Pancreas (tissue), 10 donors: ENCODE measurements at regions of chr6 and their contacts with region 1.

Region 1: GRCh38 chr6:32825966-32826365 is 9.2 kb upstream of the HLA-DOB start:
- DNase-seq: no peak
- ATAC-seq: peak; percentile 56 to 87 (median 86)
- H3K4me3 ChIP-seq: no peak overlapping the region
- H3K27ac ChIP-seq: peak overlapping the region in 2 of 4 donors; percentile 4 to 33
- H3K4me1 ChIP-seq: peaks cover 0 to 4% (median 0%) of the 10 kb centered on the region in 3 donors
- H3K27me3 ChIP-seq: no peaks in the 10 kb centered on the region
- CTCF ChIP-seq: peak in 2 of 4 donors; percentile 20 to 22

Region 2: DNA sequence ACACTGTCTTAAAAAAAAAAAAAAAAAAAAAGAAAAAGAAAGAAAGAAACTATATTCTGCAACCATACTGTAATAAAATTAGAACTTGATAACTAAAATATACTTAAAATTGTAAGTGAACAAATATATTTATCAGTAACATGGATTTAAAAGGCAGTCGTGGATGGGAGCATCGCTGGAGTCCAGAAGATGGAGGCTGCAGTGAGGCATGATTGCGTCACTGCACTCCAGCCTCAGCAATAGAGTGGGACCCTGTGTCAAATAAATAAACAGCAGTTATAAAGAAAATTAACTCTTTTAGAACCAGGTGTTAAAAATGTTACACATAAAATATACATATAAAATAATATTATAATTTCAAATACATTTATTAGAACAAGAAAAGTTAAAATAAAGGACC is 36.8 kb after region 1 on chr6:
- intact Hi-C with region 1: loop called in 2 of 3 experiments (anchors 5 kb)
- DNase-seq: no peak
- ATAC-seq: no peak
- H3K4me3 ChIP-seq: no peak overlapping the region
- H3K27ac ChIP-seq: no peak overlapping the region
- H3K4me1 ChIP-seq: peaks cover 0 to 5% (median 3%) of the 10 kb centered on the region in 3 donors
- H3K27me3 ChIP-seq: no peaks in the 10 kb centered on the region
- CTCF ChIP-seq: no peak

Region 3: DNA sequence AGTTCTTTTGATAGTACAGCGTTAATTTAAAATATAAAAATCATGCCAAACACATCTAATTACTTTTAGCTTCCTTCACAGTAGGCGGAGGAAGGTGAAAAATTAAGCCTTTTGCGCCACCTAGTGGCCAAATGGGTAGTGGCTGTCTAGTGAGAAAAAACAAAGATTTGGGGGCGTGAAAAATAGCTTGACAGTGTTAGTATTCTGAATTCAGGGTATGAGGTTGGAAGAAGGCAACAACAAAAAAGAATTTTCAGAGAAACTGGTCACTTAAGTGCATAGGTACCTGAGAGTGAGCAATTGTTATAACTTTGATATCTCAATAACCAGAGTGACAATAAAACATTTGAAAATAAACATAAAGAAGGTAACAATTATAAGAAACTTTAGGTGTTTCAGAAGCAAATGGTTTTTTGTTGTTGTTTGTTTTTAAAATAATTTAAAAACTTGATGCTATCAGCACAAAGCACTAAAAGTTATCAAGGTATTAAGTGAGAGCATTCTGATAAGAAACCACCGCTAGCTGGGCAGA is 42.4 kb after region 1 on chr6:
- intact Hi-C with region 1: loop called in 2 of 3 experiments (anchors 5 kb)
- DNase-seq: peak in 5 of 6 donors; percentile 59 to 91 (median 76)
- ATAC-seq: peak; percentile 72 to 92 (median 90)
- H3K4me3 ChIP-seq: no peak overlapping the region
- H3K27ac ChIP-seq: no peak overlapping the region
- H3K4me1 ChIP-seq: no peaks in the 10 kb centered on the region
- H3K27me3 ChIP-seq: no peaks in the 10 kb centered on the region
- CTCF ChIP-seq: peak; percentile 84 to 94 (median 91)

Region 4: DNA sequence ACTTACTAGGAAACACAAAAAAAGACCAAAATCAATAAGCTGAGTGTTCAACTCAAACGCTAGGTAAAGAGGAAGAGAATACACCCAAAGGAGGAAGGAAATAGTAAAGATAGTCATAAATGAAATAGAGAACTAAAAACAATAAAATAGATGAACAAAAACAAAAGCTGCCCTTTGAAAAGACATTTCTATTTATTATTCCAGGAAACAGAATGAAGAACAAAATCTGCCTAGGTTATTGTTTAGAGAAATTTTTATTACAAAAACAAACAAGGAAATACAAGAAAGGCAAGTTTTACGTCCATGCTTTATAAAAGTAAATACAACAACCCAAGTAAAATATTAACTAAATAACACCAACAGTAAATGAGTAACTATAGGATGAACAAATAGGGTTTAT is 94.7 kb after region 1 on chr6:
- intact Hi-C with region 1: no loop called
- DNase-seq: no peak
- ATAC-seq: peak in 1 of 4 donors; percentile 36
- H3K4me3 ChIP-seq: no peak overlapping the region
- H3K27ac ChIP-seq: no peak overlapping the region
- H3K4me1 ChIP-seq: peaks cover 6 to 16% (median 8%) of the 10 kb centered on the region in 3 donors
- H3K27me3 ChIP-seq: no peaks in the 10 kb centered on the region
- CTCF ChIP-seq: no peak